Heart left ventricle (tissue), 16 donors: ENCODE measurements at regions of chr2 and their contacts with region 1.

Region 1: DNA sequence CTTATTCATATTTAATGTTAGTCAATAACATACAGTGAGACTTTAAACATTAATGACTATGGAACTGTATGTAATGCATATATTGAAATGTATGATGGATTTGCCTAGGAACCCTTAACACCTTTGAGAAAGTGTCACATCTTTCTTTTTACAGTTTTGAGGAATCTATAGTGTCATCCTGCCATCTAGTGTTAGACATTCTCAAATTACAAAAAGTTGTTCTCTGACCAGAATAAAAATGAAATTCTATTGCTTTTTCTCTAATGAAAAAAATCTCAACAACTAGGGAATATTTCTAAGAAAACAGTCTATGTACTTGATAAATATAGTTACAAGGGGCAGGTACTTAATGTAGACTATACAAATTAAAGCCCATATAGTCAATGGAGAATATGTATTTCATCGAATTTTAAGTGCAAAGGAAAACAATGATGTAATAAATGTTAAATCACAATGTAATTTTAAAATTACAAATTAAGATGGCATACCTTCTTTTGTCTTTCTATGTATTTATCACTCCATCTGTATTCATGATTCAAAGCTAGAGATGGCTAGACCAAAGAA is 5.1 kb upstream of the CALCRL start:
- DNase-seq: no peak
- ATAC-seq: no peak
- H3K4me3 ChIP-seq: no peak overlapping the region
- H3K27ac ChIP-seq: no peak overlapping the region
- H3K4me1 ChIP-seq: peaks cover 0 to 3% (median 0%) of the 10 kb centered on the region in 12 donors
- H3K27me3 ChIP-seq: no peaks in the 10 kb centered on the region
- CTCF ChIP-seq: peak in 11 of 12 donors; percentile 34 to 71 (median 49)
- POLR2A ChIP-seq: no peak

Region 2: GRCh38 chr2:186862869-186863709 is 590.1 kb before region 1 on chr2:
- intact Hi-C with region 1: loop called (anchors 2 to 5 kb)
- DNase-seq: no peak
- ATAC-seq: peak in 2 of 4 donors; percentile 59 to 63
- H3K4me3 ChIP-seq: no peak overlapping the region
- H3K27ac ChIP-seq: no peak overlapping the region
- H3K4me1 ChIP-seq: peaks cover 0 to 7% (median 0%) of the 10 kb centered on the region in 12 donors
- H3K27me3 ChIP-seq: no peaks in the 10 kb centered on the region
- CTCF ChIP-seq: peak; percentile 58 to 86 (median 70)
- POLR2A ChIP-seq: no peak

Region 3: GRCh38 chr2:186909095-186909494 is 544.1 kb before region 1 on chr2:
- intact Hi-C with region 1: loop called in 4 of 10 experiments (anchors 5 to 10 kb)
- DNase-seq: no peak
- ATAC-seq: peak; percentile 41 to 65 (median 55)
- H3K4me3 ChIP-seq: no peak overlapping the region
- H3K27ac ChIP-seq: peak overlapping the region in 5 of 12 donors; percentile 6 to 53 (median 36)
- H3K4me1 ChIP-seq: peaks cover 0 to 10% (median 0%) of the 10 kb centered on the region in 12 donors
- H3K27me3 ChIP-seq: no peaks in the 10 kb centered on the region
- CTCF ChIP-seq: no peak
- POLR2A ChIP-seq: no peak

Region 4: DNA sequence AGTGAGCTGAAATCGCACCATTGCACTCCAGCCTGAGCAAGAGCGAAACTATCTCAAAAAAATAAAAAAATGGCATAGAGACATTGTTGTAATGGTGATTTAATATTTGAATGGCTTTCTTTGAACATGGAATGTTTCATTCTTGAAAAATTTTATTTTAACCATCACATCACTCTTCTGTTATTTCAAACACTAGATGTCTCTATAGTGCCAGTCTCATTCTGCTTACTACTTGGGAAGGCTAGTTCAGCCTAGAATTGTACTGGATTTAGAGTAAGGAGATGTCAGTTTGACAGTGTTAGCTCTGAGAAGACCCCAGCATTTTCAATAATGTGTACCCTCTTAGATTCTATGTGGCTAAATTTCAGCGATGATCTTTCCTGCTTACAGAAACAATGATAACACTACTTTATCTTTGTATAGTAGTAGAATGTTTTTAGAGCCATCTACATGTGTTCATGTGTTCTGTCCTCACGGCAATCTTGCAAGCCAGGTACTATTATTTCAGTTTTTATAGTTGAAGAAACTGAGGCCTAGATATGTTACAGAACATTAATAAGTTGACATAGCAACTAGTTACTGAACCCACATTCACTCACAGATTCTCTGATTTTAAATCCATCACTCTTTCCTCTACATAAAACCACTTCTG is 461.3 kb before region 1 on chr2:
- intact Hi-C with region 1: loop called in 3 of 10 experiments (anchors 5 to 10 kb)
- DNase-seq: no peak
- ATAC-seq: peak in 1 of 4 donors; percentile 53
- H3K4me3 ChIP-seq: no peak overlapping the region
- H3K27ac ChIP-seq: no peak overlapping the region
- H3K4me1 ChIP-seq: peaks cover 0 to 6% (median 0%) of the 10 kb centered on the region in 12 donors
- H3K27me3 ChIP-seq: no peaks in the 10 kb centered on the region
- CTCF ChIP-seq: peak in 6 of 12 donors; percentile 14 to 46 (median 32)
- POLR2A ChIP-seq: no peak

Region 5: GRCh38 chr2:187037310-187037709 is 415.9 kb before region 1 on chr2:
- intact Hi-C with region 1: no loop called
- DNase-seq: no peak
- ATAC-seq: no peak
- H3K4me3 ChIP-seq: no peak overlapping the region
- H3K27ac ChIP-seq: no peak overlapping the region
- H3K4me1 ChIP-seq: no peaks in the 10 kb centered on the region
- H3K27me3 ChIP-seq: no peaks in the 10 kb centered on the region
- CTCF ChIP-seq: no peak
- POLR2A ChIP-seq: no peak

Region 6: DNA sequence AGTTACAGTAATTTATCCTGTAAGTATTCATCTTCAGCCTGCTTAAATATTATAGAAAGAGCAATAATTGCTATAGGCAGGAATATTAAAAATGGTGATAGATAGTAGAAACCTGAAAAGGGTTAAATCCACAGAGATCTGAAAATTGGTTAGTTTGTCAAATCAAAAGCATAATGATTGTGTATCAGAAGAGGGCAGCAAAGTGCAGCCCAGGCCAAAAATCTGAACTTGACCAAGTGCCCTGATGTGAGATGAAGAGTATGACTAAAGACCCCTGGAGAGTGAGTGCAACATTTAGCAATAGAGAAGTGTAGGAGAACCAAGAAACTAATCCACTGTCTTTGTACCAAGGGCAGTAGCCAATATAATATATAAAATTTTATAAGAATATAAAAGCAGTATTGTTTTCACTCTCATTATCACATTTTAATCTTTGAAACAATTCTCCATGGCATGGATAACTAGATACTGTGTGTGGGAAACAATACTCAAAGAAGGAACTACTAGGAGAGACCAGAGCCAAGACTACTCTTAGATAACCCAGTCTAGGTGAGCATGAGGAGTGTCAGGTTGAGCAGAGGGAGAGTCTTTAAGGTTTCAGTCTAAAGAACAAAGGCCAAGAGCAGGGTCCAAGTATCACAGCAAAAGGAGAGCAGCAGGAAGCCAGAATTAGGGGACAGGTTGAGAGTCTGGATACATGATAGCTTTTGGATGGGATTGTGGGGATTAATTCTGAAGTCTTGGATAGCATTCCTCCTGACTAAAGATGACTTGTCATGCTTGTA is 153.8 kb before region 1 on chr2:
- intact Hi-C with region 1: loop called in 9 of 10 experiments (anchors 1 to 10 kb)
- DNase-seq: peak in 1 of 5 donors; percentile 40
- ATAC-seq: no peak
- H3K4me3 ChIP-seq: no peak overlapping the region
- H3K27ac ChIP-seq: peak overlapping the region in 3 of 12 donors; percentile 5 to 36 (median 24)
- H3K4me1 ChIP-seq: peaks cover 0 to 24% (median 5%) of the 10 kb centered on the region in 12 donors
- H3K27me3 ChIP-seq: no peaks in the 10 kb centered on the region
- CTCF ChIP-seq: peak; percentile 11 to 60 (median 38)
- POLR2A ChIP-seq: no peak